ENCODE measurements at regions of chr13 and their contacts with region 1.

Region 1: DNA sequence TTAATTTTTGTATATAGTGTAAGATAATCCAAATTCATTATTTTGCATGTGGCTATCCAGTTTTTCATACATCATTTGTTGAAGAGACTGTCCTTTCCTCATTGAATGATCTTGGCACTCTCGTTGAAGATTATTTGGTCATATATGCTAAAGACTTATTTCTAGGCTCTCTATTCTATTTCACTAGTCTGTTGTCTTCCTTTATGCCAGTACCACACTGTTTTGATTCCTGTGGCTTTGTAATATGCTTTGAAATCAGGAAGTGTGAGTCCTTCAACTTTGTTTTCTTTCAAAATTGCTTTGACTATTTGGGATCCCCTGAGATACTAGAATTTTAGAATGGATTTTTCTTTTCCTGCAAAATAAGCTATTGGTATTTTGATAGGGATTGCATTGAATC is 24.5 kb downstream of the FNDC3A start:
- DNase-seq: no peak
- ATAC-seq: no peak
- H3K4me3 ChIP-seq: no peak overlapping the region
- H3K27ac ChIP-seq: no peak overlapping the region
- H3K4me1 ChIP-seq: no peaks in the 10 kb centered on the region
- H3K27me3 ChIP-seq: no peaks in the 10 kb centered on the region

Region 2: DNA sequence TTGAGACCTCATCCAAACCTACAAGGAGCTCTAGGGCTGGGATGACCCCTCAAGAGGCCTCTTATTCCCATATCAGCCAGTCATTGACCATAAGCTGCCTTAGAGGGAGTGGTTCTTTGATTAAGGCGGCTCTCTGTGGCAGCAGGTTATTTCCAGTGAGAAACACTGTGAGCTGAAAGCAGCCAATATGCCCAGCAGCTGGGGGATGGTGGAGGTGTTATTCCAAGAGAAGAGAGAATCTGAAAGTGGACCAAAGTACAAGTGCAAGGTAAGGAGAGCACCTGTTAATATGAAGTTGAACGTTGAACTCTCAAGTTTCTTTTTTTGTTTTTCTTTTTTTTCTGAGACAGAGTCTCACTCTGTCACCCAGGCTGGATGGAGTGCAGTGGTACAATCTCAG is 44.7 kb before region 1 on chr13:
- intact Hi-C with region 1: loop called in 1 of 4 experiments (anchors 5 kb)
- DNase-seq: no peak
- ATAC-seq: no peak
- H3K4me3 ChIP-seq: no peak overlapping the region
- H3K27ac ChIP-seq: no peak overlapping the region
- H3K4me1 ChIP-seq: no peaks in the 10 kb centered on the region
- H3K27me3 ChIP-seq: no peaks in the 10 kb centered on the region

Measured in right cardiac atrium (tissue), 5 donors.